ENCODE measurements at regions of chr4 and their contacts with region 1.

Region 1: DNA sequence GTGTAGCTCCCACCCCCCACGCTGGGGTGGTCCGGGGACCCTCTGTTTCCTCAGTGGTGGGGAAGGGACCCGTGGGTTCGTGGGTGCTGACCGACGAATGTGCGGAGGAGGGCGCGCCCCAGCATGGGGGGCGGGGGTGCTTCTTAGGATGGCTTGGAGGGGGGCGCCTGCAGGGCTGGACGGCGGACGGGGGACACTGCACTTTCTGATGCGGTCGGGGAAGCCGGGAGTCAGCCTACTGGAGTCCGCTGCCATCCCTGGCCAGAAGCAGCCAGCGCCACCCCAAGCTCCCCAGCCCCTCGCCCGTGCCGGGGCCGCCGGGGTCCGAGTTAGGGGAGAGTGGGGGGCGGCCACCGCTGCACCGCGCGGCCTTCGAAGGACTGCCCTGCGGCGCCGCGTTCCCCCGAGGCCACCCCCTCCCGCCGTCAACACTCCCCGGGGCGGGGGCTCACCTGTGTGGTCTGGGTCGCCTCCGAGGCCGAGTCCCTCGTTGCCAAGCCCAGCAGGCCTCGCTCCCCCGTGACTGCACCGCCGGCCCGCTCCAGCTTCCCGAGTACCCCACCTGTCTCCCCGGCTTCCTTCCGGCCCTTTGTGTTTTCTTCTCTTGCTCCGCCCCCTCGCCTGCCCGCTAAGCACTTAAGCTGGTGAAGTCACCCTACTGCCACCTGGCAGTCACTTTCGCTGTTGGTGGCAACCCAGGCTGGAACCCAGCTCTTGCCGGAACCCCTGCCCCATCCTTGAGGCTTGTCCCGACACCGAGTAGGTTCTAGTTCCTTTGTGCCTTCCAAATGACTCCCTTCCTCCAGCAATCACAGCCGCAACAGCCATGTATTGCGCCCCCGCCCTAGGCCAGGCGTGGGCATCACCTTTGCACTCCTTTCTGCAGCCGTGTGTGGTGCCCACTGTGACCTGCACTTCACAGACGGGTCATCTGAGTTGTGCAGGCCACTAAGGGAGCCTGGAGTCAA is at the start of gene OCIAD2:
- DNase-seq: peak; percentile 22 to 82
- H3K4me3 ChIP-seq: peak within 1 kb of the TSS; percentile 84 to 92
- H3K27ac ChIP-seq: peak within 1 kb of the TSS in 1 of 2 donors; percentile 29
- H3K4me1 ChIP-seq: peaks cover 0 to 15% of the 10 kb centered on the region in 2 donors
- H3K27me3 ChIP-seq: no peaks in the 10 kb centered on the region
- CTCF ChIP-seq: peak in 2 of 3 experiments; percentile 5 to 40
- total RNA-seq, gene OCIAD2: 1.9 TPM

Region 2: DNA sequence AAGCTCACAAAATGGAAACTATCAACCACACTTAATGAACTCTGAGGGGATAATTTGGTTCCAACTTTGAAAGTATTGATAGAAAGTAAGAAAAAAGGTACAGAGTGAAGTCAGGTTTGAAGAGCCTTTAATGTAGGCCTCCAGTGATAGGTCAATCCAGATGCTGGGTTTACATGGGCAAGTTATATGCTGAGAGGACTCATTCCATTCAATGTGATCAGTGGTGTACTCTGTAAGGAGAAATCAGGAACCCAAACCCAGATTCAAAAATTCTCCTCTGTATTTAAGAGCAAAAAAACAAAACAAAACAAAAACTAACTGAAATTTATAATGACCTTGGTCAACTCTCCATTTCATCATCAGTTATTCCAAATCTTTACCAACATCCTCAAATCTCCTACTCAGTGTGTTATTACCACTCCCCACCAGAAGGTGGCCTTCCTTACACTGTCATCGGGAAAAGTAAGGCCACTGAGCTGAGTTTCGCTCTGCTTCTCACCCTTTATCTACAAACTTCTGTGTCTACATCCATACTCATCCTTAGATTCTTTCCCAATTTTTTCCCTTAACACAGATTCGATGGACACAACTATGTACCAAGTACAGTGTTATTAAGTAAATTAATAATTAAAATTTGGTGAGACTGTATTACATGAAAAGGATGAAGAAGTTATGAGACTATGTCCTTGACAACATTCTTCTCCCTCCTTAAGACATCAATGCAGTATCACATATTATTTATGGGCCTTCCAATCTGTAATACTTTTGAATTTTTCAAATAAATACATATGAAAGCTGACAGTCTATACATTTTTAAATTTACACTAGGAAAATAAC is 328.1 kb before region 1 on chr4:
- intact Hi-C with region 1: loop called (anchors 5 kb)
- DNase-seq: peak in 1 of 2 donors; percentile 77
- H3K4me3 ChIP-seq: no peak overlapping the region
- H3K27ac ChIP-seq: no peak overlapping the region
- H3K4me1 ChIP-seq: no peaks in the 10 kb centered on the region
- H3K27me3 ChIP-seq: no peaks in the 10 kb centered on the region
- CTCF ChIP-seq: peak; percentile 70 to 87 (median 70)